HCT116 (cell line): ENCODE measurements at regions of chr15 and their contacts with region 1.

Region 1: GRCh38 chr15:57003418-57003817 is 85.0 kb downstream of the TCF12 start:
- DNase-seq: no peak
- ATAC-seq: no peak
- H3K4me3 ChIP-seq: no peak overlapping the region
- H3K27ac ChIP-seq: no peak overlapping the region
- H3K4me1 ChIP-seq: no peaks in the 10 kb centered on the region
- H3K27me3 ChIP-seq: no peaks in the 10 kb centered on the region
- CTCF ChIP-seq: no peak
- POLR2A ChIP-seq: no peak
- RAD21 ChIP-seq: no peak

Region 2: DNA sequence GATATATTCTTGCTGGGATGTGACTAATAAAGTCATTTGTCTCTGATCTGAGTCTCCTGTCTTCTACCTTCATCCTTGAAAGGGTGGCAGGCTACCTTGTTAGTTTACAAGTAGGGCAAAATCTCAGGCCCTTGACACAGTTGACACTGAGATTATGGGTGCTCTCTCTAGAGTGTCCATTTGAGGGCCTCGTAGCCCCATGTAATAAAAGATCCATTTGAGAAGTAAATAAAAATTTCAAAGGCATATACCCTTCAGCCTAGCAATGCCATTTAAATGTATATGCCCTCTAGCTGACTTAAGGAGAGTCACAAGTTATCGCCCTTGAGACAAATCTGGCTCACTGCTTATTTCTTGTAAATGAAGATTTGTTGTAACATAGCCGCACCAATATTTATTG is 13.6 kb after region 1 on chr15:
- CTCF ChIA-PET with region 1: no interaction called
- POLR2A ChIA-PET with region 1: no interaction called
- RAD21 ChIA-PET with region 1: no interaction called
- intact Hi-C with region 1: no loop called
- DNase-seq: no peak
- ATAC-seq: peak; percentile 38
- H3K4me3 ChIP-seq: no peak overlapping the region
- H3K27ac ChIP-seq: no peak overlapping the region
- H3K4me1 ChIP-seq: peaks cover 3 to 27% of the 10 kb centered on the region in 2 experiments; a peak in 3 of 4 replicates
- H3K27me3 ChIP-seq: no peaks in the 10 kb centered on the region
- CTCF ChIP-seq: peak in 2 of 3 experiments; percentile 16 to 30; a peak in 1 of 6 replicates
- POLR2A ChIP-seq: no peak
- RAD21 ChIP-seq: peak; percentile 24; the same call in 1 of the 2 replicates

Region 3: GRCh38 chr15:57118013-57118799 is 114.8 kb after region 1 on chr15:
- CTCF ChIA-PET with region 1: no interaction called
- POLR2A ChIA-PET with region 1: no interaction called
- RAD21 ChIA-PET with region 1: interaction called in 1 of 2 experiments, 10 read pairs
- intact Hi-C with region 1: no loop called
- DNase-seq: peak; percentile 2
- ATAC-seq: peak; percentile 22; the same call in 1 of the 2 replicates
- H3K4me3 ChIP-seq: no peak overlapping the region
- H3K27ac ChIP-seq: no peak overlapping the region
- H3K4me1 ChIP-seq: peaks cover 7 to 9% of the 10 kb centered on the region in 2 experiments
- H3K27me3 ChIP-seq: no peaks in the 10 kb centered on the region
- CTCF ChIP-seq: no peak
- POLR2A ChIP-seq: no peak
- RAD21 ChIP-seq: no peak

Region 4: DNA sequence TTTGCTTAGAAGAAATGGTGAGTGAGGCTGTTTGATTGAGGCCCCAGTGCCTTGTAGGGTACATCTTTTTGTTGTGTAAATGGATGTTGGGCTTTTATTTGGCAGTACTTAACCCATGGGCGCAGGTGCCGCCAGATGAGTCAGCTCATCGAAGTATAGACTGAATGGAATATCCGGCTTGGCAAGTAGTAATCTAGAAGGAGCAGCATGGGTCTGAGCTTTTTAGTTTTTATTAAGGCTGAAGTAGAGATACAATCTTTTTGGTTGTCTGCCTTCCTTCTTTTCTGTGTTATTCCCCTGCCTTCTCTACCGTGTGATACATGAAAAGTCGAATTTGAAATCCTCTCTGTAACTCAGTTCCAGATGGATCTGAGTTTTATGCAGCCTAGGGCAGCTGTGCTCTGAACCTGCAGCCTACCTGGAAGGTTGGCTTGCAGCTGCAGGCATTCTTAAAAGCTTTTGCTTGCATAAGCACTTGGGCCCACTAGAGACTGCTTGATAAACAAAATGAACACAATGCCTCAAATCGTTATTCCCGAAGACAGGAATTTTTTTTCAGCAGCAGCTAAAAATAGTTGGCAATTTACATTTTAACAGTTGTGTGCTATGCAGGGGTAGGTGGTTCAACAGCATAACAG is 195.4 kb after region 1 on chr15:
- CTCF ChIA-PET with region 1: no interaction called
- POLR2A ChIA-PET with region 1: no interaction called
- RAD21 ChIA-PET with region 1: no interaction called
- intact Hi-C with region 1: no loop called
- DNase-seq: no peak
- ATAC-seq: no peak
- H3K4me3 ChIP-seq: no peak overlapping the region
- H3K27ac ChIP-seq: no peak overlapping the region
- H3K4me1 ChIP-seq: no peaks in the 10 kb centered on the region
- H3K27me3 ChIP-seq: no peaks in the 10 kb centered on the region
- CTCF ChIP-seq: no peak
- POLR2A ChIP-seq: no peak
- RAD21 ChIP-seq: no peak